ENCODE measurements at regions of chr20 and their contacts with region 1.

Region 1: GRCh38 chr20:59207742-59208357 is 44.2 kb downstream of the ZNF831 start:
- DNase-seq: peak; percentile 76 to 79 (median 78)
- H3K4me3 ChIP-seq: no peak overlapping the region
- H3K4me3 Mint-ChIP-seq: peak overlapping the region in 4 of 8 donors; percentile 15 to 53 (median 33)
- H3K27ac ChIP-seq: no peak overlapping the region
- H3K27ac Mint-ChIP-seq: peak overlapping the region; percentile 35 to 95 (median 88)
- H3K4me1 ChIP-seq: peaks cover 14% of the 10 kb centered on the region
- H3K4me1 Mint-ChIP-seq: peaks cover 29 to 55% (median 35%) of the 10 kb centered on the region in 4 donors
- H3K27me3 ChIP-seq: no peaks in the 10 kb centered on the region
- H3K27me3 Mint-ChIP-seq: no peaks in the 10 kb centered on the region

Region 2: GRCh38 chr20:58870239-58871014 is 337.4 kb before region 1 on chr20:
- CTCF ChIA-PET with region 1: interaction called, 14 read pairs
- POLR2A ChIA-PET with region 1: no interaction called
- intact Hi-C with region 1: loop called (anchors 5 kb)
- DNase-seq: peak in 4 of 5 donors; percentile 42 to 60 (median 48)
- H3K4me3 ChIP-seq: no peak overlapping the region
- H3K4me3 Mint-ChIP-seq: peak overlapping the region in 1 of 8 donors; percentile 32
- H3K27ac ChIP-seq: no peak overlapping the region
- H3K27ac Mint-ChIP-seq: peak overlapping the region in 1 of 7 donors; percentile 57
- H3K4me1 ChIP-seq: no peaks in the 10 kb centered on the region
- H3K4me1 Mint-ChIP-seq: peaks cover 0 to 3% (median 0%) of the 10 kb centered on the region in 4 donors
- H3K27me3 ChIP-seq: no peaks in the 10 kb centered on the region
- H3K27me3 Mint-ChIP-seq: no peaks in the 10 kb centered on the region

Region 3: DNA sequence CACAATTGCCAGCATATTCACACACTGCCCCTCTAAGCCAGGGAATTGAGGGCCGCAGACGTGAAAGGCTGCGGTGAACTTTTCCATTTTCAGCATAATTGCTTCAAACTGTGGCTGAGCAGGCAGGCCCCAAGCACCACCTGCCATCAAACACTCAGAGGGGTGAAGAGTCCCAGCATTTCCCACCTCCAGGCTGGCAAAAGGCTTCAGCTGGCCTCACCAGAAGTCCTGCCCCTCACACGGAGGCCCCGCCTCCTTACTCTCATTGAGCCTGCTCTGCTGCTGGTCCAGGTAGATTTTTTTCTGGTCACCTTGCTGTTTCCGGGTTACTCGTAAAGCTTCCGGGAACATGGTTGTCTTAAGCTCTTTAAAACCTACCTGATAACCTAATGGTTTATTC is 113.3 kb before region 1 on chr20:
- CTCF ChIA-PET with region 1: interaction called, 239 read pairs
- POLR2A ChIA-PET with region 1: interaction called, 6 read pairs
- intact Hi-C with region 1: no loop called
- DNase-seq: no peak
- H3K4me3 ChIP-seq: no peak overlapping the region
- H3K4me3 Mint-ChIP-seq: no peak overlapping the region
- H3K27ac ChIP-seq: no peak overlapping the region
- H3K27ac Mint-ChIP-seq: peak overlapping the region in 1 of 7 donors; percentile 2
- H3K4me1 ChIP-seq: no peaks in the 10 kb centered on the region
- H3K4me1 Mint-ChIP-seq: peaks cover 0 to 8% (median 7%) of the 10 kb centered on the region in 4 donors
- H3K27me3 ChIP-seq: no peaks in the 10 kb centered on the region
- H3K27me3 Mint-ChIP-seq: no peaks in the 10 kb centered on the region

Region 4: DNA sequence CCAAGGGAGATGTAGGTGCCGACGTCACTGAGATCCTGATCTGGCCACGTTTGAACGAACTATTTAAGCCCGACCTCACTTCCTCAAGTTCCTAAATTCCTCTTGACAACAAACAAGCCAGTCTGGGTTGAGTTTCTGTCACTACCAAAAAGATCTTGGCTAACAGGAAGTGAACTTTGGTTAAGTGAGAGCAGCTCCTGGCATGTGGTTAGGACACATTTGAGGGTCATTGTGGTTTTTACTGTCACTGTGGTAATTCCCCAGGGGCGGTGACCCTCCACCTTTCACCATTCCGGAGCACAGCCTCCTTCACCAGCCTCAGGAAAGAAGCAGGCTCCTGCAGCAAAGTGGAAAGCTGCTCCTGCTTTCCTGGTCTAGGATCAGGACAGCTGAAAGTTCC is 87.4 kb before region 1 on chr20:
- CTCF ChIA-PET with region 1: interaction called, 66 read pairs
- POLR2A ChIA-PET with region 1: interaction called, 36 read pairs
- intact Hi-C with region 1: loop called (anchors 1 kb)
- DNase-seq: peak; percentile 52 to 69 (median 64)
- H3K4me3 ChIP-seq: no peak overlapping the region
- H3K4me3 Mint-ChIP-seq: peak overlapping the region; percentile 32 to 89 (median 71)
- H3K27ac ChIP-seq: peak overlapping the region; percentile 80
- H3K27ac Mint-ChIP-seq: peak overlapping the region; percentile 94 to 100 (median 99)
- H3K4me1 ChIP-seq: peaks cover 86% of the 10 kb centered on the region
- H3K4me1 Mint-ChIP-seq: peaks cover 66 to 94% (median 86%) of the 10 kb centered on the region in 4 donors
- H3K27me3 ChIP-seq: no peaks in the 10 kb centered on the region
- H3K27me3 Mint-ChIP-seq: no peaks in the 10 kb centered on the region

Region 5: DNA sequence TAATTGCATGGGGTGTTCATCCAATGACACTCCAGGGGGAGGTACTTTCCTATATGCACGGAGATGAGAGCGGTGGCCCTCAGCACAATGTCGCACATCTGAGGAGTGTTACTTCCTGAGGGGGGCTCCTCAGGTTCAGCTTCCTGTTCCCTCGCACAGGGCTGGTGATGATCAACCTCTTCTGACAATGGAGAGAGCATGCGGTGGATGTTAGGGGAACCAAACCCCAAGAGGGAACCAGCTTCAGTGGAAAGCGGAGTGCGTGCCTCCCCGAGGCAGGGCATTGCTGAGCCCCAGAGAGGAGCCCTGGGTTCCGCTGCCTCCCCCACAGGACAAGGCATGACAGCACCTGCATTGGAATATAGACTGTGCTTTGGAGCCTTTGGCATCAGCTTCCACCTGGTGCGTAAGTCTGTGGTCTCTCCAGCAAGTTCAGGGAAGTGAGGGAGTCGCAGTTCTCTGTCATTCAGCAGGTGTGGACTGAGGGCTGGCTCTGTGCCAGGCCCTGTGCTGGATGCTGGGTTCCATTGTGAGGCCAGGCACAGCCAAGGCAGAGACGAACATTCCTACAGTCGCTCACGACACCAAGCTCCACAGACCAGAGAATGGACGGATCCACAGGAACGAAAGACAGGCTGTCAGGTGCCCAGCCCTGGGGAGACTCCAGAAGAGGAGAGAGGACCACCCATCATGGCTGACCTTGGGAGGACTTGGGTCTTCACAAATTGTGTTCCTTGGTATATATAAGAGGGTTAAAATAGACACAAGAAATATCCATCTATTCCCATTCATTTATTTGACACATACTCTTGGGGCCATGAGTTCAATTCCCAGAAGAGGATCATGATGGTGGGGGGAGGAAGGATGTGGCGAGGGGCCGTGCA is 48.1 kb before region 1 on chr20:
- CTCF ChIA-PET with region 1: interaction called, 33 read pairs
- POLR2A ChIA-PET with region 1: interaction called, 14 read pairs
- intact Hi-C with region 1: no loop called
- DNase-seq: peak; percentile 85 to 94 (median 89)
- H3K4me3 ChIP-seq: peak overlapping the region; percentile 48 to 76
- H3K4me3 Mint-ChIP-seq: peak overlapping the region; percentile 83 to 96 (median 89)
- H3K27ac ChIP-seq: peak overlapping the region; percentile 97
- H3K27ac Mint-ChIP-seq: peak overlapping the region; percentile 97 to 99 (median 99)
- H3K4me1 ChIP-seq: peaks cover 85% of the 10 kb centered on the region
- H3K4me1 Mint-ChIP-seq: peaks cover 67 to 98% (median 81%) of the 10 kb centered on the region in 4 donors
- H3K27me3 ChIP-seq: no peaks in the 10 kb centered on the region
- H3K27me3 Mint-ChIP-seq: no peaks in the 10 kb centered on the region

Region 6: DNA sequence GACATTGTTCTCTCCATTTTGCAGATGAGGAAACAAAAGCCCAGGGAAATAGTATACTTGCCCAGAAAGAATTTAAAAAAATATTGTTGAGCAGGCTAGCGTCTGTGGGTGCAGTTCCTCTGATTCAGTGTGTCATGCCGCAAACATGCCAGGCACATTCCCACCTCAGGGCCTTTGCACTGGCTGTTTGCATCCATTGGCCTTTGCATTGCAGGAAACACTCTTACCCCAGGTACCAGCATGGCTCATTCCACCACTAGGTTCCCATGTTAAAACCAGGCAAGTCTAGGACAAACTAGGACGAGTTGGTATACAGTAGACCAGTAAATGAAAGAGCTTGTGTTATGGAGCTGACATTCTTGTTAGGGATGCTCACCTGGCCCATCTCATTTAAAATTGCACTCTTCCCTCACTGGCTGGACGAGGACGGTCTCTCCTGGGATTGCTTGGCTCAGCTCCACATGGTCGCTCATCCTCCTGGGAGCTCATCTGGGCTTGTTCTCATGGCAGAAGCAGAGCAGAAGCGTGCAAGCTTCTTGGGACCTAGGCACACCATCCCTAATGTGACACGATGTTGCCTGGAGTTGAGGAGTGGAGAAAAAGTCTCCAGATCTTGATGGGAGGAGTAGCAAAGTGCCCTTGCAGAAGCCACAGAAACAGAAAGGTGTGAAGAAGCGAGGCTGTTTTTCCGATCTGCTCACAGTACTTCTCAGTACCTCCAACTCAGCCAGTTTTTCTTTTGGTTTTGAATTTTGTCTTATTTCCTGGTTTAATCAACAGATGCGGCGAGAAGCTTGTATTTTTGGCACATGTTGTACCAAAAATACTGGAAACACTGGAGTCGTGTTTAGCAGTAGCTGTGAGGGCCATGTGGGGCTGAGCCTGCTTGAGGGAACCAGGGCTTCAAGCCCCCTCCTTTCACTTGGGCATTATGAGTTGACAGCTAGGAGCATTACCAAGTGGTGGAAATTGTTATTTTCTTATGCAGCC is 30.3 kb before region 1 on chr20:
- CTCF ChIA-PET with region 1: interaction called, 40 read pairs
- POLR2A ChIA-PET with region 1: interaction called, 4 read pairs
- intact Hi-C with region 1: no loop called
- DNase-seq: peak; percentile 54 to 75 (median 59)
- H3K4me3 ChIP-seq: no peak overlapping the region
- H3K4me3 Mint-ChIP-seq: peak overlapping the region; percentile 67 to 88 (median 78)
- H3K27ac ChIP-seq: peak overlapping the region; percentile 68
- H3K27ac Mint-ChIP-seq: peak overlapping the region; percentile 88 to 98 (median 96)
- H3K4me1 ChIP-seq: peaks cover 84% of the 10 kb centered on the region
- H3K4me1 Mint-ChIP-seq: peaks cover 70 to 98% (median 86%) of the 10 kb centered on the region in 4 donors
- H3K27me3 ChIP-seq: no peaks in the 10 kb centered on the region
- H3K27me3 Mint-ChIP-seq: no peaks in the 10 kb centered on the region

Region 7: DNA sequence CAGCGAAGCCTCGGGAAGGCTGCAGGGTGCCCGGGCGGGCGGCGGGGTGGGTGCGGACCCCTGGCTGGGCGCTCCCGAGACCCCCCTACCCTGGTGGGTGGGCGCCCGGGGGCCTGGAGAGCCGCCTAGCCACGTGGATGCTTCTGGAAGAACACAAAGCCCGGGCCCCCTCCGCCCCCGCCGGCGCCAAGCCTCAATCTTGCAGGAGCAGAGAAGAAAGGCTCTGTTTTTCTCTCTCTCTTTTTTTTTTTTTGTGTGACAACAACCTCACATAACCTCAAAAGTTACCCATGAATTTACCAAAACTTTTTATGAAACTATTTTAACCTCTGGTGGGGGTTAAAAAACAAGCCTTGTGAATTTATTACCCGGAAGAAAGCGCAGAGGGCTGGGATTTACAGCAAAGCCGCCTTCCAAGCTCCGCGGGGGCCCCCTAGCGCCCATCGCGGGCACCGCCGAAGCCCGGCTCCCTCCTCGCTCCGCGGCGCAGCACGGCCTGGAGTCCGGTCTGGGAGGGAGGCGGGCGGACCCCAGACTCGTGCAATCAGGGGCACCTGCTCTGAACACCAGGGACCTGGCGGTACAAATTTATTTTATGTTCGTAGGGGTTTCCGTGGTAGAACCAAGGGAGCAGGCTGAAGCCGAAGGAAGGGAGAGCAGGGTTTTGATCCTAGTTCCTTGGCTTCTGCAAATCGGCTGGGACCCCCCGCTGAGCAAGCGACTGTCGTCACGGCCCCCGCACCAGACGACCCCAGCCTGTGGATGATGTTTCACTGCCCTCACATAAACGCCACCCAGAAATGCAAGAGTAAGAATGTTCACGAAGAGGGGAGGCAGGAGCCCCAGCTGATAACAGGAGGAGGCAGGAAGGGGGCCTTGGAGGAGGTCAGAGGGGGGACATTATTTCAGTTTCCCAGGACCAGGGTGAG is 14.7 kb after region 1 on chr20:
- CTCF ChIA-PET with region 1: interaction called, 41 read pairs
- POLR2A ChIA-PET with region 1: no interaction called
- intact Hi-C with region 1: no loop called
- DNase-seq: peak; percentile 75 to 79 (median 77)
- H3K4me3 ChIP-seq: peak overlapping the region in 1 of 2 donors; percentile 30
- H3K4me3 Mint-ChIP-seq: peak overlapping the region; percentile 78 to 86 (median 83)
- H3K27ac ChIP-seq: peak overlapping the region; percentile 36
- H3K27ac Mint-ChIP-seq: peak overlapping the region; percentile 54 to 93 (median 82)
- H3K4me1 ChIP-seq: peaks cover 20% of the 10 kb centered on the region
- H3K4me1 Mint-ChIP-seq: peaks cover 9 to 32% (median 19%) of the 10 kb centered on the region in 4 donors
- H3K27me3 ChIP-seq: no peaks in the 10 kb centered on the region
- H3K27me3 Mint-ChIP-seq: no peaks in the 10 kb centered on the region

Region 8: DNA sequence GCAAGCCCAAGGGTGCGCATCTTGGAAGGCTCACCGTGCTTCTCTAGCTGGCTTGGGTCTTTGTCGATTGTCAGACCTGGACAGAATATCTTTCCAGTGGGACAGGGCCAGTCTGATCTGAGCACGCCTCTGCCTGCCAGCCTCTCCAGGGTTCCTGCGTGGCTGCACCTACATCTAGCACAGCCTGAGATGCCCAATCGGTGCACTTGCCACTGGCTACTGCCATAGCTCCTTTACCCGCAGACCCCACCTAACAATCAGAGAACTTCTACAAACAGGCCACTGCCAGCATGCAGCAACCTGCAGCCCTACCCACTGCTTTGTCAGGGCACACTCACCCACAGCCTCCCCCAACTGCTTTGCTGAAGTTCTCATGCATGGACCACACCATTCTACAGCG is 339.7 kb after region 1 on chr20:
- CTCF ChIA-PET with region 1: no interaction called
- POLR2A ChIA-PET with region 1: no interaction called
- intact Hi-C with region 1: no loop called
- DNase-seq: no peak
- H3K4me3 ChIP-seq: no peak overlapping the region
- H3K4me3 Mint-ChIP-seq: no peak overlapping the region
- H3K27ac ChIP-seq: no peak overlapping the region
- H3K27ac Mint-ChIP-seq: no peak overlapping the region
- H3K4me1 ChIP-seq: no peaks in the 10 kb centered on the region
- H3K4me1 Mint-ChIP-seq: no peaks in the 10 kb centered on the region
- H3K27me3 ChIP-seq: peaks cover 4% of the 10 kb centered on the region
- H3K27me3 Mint-ChIP-seq: peaks cover 11 to 18% of the 10 kb centered on the region in 2 donors

Region 9: GRCh38 chr20:60632391-60633262 is 1424.8 kb after region 1 on chr20:
- CTCF ChIA-PET with region 1: no interaction called
- POLR2A ChIA-PET with region 1: no interaction called
- intact Hi-C with region 1: no loop called
- DNase-seq: no peak
- H3K4me3 ChIP-seq: no peak overlapping the region
- H3K4me3 Mint-ChIP-seq: no peak overlapping the region
- H3K27ac ChIP-seq: no peak overlapping the region
- H3K27ac Mint-ChIP-seq: no peak overlapping the region
- H3K4me1 ChIP-seq: no peaks in the 10 kb centered on the region
- H3K4me1 Mint-ChIP-seq: no peaks in the 10 kb centered on the region
- H3K27me3 ChIP-seq: no peaks in the 10 kb centered on the region
- H3K27me3 Mint-ChIP-seq: peaks cover 0 to 7% of the 10 kb centered on the region in 2 donors